ENCODE measurements at regions of chr1 and their contacts with region 1.

Region 1: DNA sequence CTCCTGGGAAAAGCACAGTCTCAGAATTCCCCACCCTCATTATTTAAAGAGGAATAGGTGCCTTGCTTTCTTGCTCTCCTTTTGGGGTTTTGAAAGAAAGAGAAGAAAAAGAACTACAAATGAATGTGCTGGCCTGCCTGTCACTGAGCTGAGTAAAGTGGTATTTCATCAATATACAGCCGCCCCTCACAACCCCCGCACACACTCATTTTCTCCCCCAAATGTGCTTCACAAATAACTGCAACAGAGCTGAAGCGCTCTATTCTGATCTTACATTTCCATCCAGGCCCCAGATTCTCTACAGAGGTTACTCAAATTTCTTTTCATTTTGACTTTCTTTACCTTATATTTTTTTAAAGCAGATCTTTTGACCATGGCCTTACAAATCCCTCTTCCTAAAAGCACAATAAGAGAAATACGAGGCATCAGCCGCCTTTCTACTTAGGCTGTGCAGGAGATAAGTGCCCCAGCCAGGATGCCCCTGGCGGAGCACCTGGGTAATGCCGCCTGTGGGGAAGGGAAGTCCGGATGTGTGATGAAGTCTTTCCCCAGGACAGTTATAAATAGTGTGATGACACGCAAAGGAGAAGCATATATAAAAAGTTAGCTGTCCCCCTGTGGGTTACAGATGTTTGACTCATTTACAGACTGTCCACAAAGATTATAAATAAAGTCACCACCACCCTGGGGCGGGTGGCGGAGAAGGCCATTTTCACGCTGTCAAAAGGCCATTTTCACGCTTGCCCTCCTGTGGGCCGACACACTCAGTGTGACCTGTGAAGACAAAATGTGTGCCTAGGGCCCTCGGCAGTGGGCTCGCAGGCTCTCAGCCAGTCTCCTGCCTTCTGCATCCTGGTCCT is 6.5 kb downstream of the KCNN3 start:
- DNase-seq: peak; percentile 68 to 91
- ATAC-seq: peak; percentile 35 to 37
- H3K4me3 ChIP-seq: no peak overlapping the region
- H3K27ac ChIP-seq: peak overlapping the region; percentile 91 to 99 (median 96)
- H3K4me1 ChIP-seq: peaks cover 67 to 81% of the 10 kb centered on the region in 2 donors
- H3K27me3 ChIP-seq: no peaks in the 10 kb centered on the region
- CTCF ChIP-seq: peak; percentile 85 to 94 (median 91)
- POLR2A ChIP-seq: peak; percentile 65 to 72

Region 2: GRCh38 chr1:153488731-153489130 is 1374.8 kb before region 1 on chr1:
- in situ Hi-C with region 1: no loop called
- intact Hi-C with region 1: loop called (anchors 5 kb)
- DNase-seq: peak; percentile 69 to 72
- ATAC-seq: peak; percentile 42 to 69
- H3K4me3 ChIP-seq: no peak overlapping the region
- H3K27ac ChIP-seq: peak overlapping the region; percentile 82 to 90 (median 86)
- H3K4me1 ChIP-seq: peaks cover 23 to 27% of the 10 kb centered on the region in 2 donors
- H3K27me3 ChIP-seq: no peaks in the 10 kb centered on the region
- CTCF ChIP-seq: no peak
- POLR2A ChIP-seq: no peak

Region 3: GRCh38 chr1:154431586-154432373 is 431.8 kb before region 1 on chr1:
- in situ Hi-C with region 1: no loop called
- intact Hi-C with region 1: loop called (anchors 5 kb)
- DNase-seq: peak; percentile 74 to 85
- ATAC-seq: peak; percentile 51 to 66
- H3K4me3 ChIP-seq: no peak overlapping the region
- H3K27ac ChIP-seq: peak overlapping the region; percentile 80 to 100 (median 91)
- H3K4me1 ChIP-seq: peaks cover 80 to 82% of the 10 kb centered on the region in 2 donors
- H3K27me3 ChIP-seq: no peaks in the 10 kb centered on the region
- CTCF ChIP-seq: no peak
- POLR2A ChIP-seq: peak in 1 of 2 donors; percentile 25

Region 4: DNA sequence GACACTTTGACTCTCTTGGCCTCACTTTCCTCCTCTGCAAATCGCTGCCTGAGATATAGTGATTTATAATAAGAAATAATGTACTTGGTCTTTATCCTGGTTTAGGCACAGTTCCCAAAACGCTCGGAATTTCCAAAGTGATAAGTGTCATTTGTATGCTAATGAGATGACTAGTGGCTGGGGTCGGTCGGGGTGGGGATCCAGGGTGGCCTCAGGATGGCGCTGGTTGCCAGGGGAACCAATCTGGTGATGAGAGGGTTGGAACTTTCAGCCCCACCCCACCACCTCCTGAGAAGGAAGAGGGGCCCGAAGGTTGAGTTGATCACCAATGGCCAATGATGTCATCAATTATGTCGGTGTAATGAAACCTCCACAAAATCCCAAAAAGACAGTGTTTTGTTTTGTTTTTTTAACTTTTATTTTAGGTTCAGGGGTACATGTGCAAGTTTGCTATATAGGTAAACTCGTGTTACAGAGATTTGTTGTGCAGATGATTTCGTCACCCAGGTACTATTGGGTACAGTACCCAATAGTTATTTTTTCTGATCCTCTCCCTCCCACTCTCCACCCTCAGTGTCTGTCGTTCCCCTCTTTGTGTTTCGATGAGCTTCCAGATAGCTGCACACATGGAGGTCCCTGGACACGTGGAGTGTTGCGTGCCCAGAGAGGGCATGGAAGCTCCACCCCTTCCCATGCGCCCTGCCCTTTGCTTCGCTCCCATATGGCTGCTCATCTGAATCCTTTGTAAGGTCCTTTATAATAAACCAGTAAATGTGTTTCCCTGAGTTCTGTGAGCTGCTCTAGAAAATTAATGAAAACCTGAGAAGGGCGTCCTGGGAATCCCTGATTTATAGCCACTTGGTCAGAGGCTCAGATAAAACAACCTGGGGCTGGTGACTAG is 90.7 kb before region 1 on chr1:
- in situ Hi-C with region 1: no loop called
- intact Hi-C with region 1: no loop called
- DNase-seq: no peak
- ATAC-seq: no peak
- H3K4me3 ChIP-seq: no peak overlapping the region
- H3K27ac ChIP-seq: no peak overlapping the region
- H3K4me1 ChIP-seq: peaks cover 5 to 10% of the 10 kb centered on the region in 2 donors
- H3K27me3 ChIP-seq: no peaks in the 10 kb centered on the region
- CTCF ChIP-seq: no peak
- POLR2A ChIP-seq: no peak

Region 5: GRCh38 chr1:154809436-154810413 is 53.8 kb before region 1 on chr1:
- in situ Hi-C with region 1: no loop called
- intact Hi-C with region 1: loop called (anchors 2 kb)
- DNase-seq: peak; percentile 23 to 63
- ATAC-seq: peak; percentile 63 to 64
- H3K4me3 ChIP-seq: peak overlapping the region in 1 of 4 donors; percentile 23
- H3K27ac ChIP-seq: peak overlapping the region; percentile 81 to 92 (median 85)
- H3K4me1 ChIP-seq: peaks cover 45 to 51% of the 10 kb centered on the region in 2 donors
- H3K27me3 ChIP-seq: no peaks in the 10 kb centered on the region
- CTCF ChIP-seq: no peak
- POLR2A ChIP-seq: no peak

Region 6: GRCh38 chr1:154837672-154838171 is 25.8 kb before region 1 on chr1:
- in situ Hi-C with region 1: no loop called
- intact Hi-C with region 1: loop called (anchors 1 kb)
- DNase-seq: peak; percentile 40 to 79
- ATAC-seq: peak; percentile 36 to 69
- H3K4me3 ChIP-seq: no peak overlapping the region
- H3K27ac ChIP-seq: peak overlapping the region; percentile 42 to 68 (median 64)
- H3K4me1 ChIP-seq: peaks cover 49 to 56% of the 10 kb centered on the region in 2 donors
- H3K27me3 ChIP-seq: no peaks in the 10 kb centered on the region
- CTCF ChIP-seq: no peak
- POLR2A ChIP-seq: no peak

Measured in gastrocnemius medialis (tissue), 4 donors.